CD4-positive, alpha-beta T cell (primary cell): ENCODE measurements at regions of chr5 and their contacts with region 1.

Region 1: DNA sequence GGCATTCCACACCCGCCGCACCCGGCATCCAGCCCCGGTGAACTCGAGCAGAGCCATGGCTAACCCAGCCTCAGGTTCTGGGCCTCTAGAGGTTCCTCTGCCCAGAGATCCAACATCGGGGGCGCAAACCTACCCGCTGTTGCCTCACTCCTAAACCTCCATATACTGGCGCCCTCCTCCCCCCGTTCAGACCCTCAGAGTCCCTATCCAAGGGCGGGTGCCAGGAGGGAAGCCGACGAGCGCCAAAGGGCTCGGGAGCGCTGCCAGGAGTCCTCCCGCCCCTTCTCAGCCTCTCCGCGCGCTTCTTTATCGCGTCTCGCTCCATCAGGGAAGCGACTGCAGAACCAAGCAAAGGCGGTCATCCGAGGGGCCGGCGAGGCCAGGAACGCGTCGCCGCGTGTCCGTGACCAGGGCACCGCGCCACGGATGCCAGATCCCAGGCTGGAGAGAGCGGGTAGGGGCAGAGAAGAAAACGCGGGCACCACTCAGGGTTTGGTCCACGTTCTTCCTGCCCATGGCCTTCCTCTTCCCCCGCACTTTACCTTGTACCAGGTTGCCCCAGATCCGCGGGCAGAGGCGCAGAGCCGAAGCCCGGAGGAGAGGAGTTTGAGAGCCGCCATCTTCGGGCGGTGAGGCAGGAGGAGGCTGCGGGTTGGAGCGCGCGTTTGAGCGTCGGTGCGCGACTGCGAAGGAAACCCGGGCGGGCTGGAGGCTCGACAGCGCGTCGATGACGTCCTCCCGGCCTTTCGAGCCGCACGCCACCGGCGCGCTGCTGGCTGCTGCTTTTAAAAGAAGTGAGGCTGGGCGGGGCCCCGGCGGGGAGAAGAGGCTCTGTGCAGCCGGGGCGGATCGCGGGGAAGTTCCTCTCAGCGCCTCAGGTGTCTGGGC is at the start of gene OXCT1:
- DNase-seq: peak; percentile 91 to 98 (median 93)
- ATAC-seq: peak; percentile 92
- H3K4me3 ChIP-seq: peak within 1 kb of the TSS; percentile 81
- H3K4me3 Mint-ChIP-seq: peak within 1 kb of the TSS; percentile 92
- H3K27ac ChIP-seq: peak within 1 kb of the TSS; percentile 88
- H3K27ac Mint-ChIP-seq: peak within 1 kb of the TSS; percentile 95
- H3K4me1 ChIP-seq: peaks cover 30% of the 10 kb centered on the region
- H3K4me1 Mint-ChIP-seq: peaks cover 69% of the 10 kb centered on the region
- H3K27me3 ChIP-seq: no peaks in the 10 kb centered on the region
- H3K27me3 Mint-ChIP-seq: no peaks in the 10 kb centered on the region
- CTCF ChIP-seq: no peak
- total RNA-seq, gene OXCT1: 14.7 to 15.3 TPM

Region 2: DNA sequence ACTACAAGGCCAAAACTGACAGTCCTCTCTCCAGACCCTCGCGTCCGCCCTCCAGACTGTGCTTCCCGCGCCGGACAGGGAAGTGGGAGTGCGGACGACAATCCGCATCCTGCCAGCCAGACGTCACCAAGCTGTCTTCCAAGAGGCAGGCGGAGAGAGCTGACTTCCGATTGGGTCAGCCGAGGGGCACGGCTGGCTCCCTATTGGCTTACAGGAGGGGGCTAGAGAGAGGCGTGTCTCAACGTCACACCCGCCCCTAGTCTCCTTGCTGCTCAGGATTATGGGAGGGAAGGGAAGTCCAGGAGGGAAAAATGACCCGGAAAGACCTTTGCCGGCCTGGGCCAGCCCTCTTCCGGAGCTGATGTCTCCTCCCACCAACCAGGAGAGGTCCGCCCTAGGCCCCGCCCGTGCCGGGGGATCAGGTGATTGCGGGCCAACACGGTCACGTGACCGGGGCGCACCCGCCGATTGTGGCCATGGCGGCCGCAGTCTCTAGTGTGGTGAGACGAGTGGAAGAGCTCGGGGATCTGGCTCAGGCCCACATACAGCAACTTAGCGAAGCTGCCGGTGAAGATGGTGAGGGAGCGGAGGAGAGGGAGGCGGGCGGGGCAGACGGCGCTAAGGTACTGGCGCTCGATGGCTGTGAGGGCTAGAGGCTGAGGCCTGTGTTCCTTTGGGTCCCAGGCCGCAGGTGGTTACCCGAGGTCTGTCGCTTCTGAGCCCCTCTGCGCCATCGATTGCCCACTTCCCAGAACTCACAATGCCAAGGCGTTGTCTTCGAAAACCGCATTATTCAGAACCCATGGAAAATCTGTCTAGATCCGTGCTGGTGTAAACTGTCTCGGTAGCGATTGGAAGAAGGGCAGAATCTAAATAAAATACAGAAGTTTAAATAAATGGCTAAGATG is 34.2 kb after region 1 on chr5 and contains the start of gene RIMOC1:
- CTCF ChIA-PET with region 1: interaction called, 6 read pairs
- POLR2A ChIA-PET with region 1: interaction called, 74 read pairs
- intact Hi-C with region 1: loop called (anchors 1 kb)
- DNase-seq: peak; percentile 93 to 99 (median 96)
- ATAC-seq: peak; percentile 85
- H3K4me3 ChIP-seq: peak within 1 kb of the TSS; percentile 86
- H3K4me3 Mint-ChIP-seq: peak within 1 kb of the TSS; percentile 98
- H3K27ac ChIP-seq: peak within 1 kb of the TSS; percentile 89 to 90
- H3K27ac Mint-ChIP-seq: peak within 1 kb of the TSS; percentile 99
- H3K4me1 ChIP-seq: peaks cover 20% of the 10 kb centered on the region
- H3K4me1 Mint-ChIP-seq: peaks cover 46% of the 10 kb centered on the region
- H3K27me3 ChIP-seq: no peaks in the 10 kb centered on the region
- H3K27me3 Mint-ChIP-seq: no peaks in the 10 kb centered on the region
- CTCF ChIP-seq: no peak
- total RNA-seq, gene RIMOC1: 9.3 to 10.3 TPM